ENCODE measurements at regions of chr4 and their contacts with region 1.

Region 1: DNA sequence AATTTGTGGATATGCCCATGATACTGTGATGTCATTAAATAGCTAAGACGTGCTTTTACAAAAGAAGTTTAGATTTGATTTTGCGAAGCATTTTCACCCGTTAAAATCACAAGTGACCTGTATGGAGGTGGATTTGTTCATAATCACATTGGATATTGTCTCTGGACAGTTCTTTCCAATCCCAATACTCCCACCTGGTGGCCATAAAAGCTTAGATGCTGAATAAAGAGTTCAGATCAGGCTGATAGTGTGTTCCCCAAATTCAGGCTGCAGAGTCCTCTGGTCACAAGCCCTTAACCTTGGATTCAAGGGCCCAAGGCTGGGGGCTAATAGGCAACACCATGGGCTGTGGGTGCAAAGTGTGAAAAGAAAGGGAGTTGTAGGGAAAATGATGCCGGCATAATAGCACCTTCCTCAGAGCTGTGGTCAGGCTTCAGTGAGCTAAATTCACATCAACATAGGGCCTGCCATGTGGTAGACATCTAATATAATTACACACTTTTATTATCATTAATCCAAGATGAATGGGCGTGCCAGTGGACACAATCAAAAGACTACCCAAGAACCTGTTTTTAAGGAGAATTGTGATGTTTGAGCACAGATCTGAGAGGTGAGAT is 28.1 kb downstream of the SMIM43 start:
- DNase-seq: no peak
- H3K4me3 ChIP-seq: no peak overlapping the region
- H3K27ac ChIP-seq: no peak overlapping the region
- H3K4me1 ChIP-seq: no peaks in the 10 kb centered on the region
- H3K27me3 ChIP-seq: no peaks in the 10 kb centered on the region
- CTCF ChIP-seq: peak in 4 of 6 experiments; percentile 31 to 49 (median 44)
- POLR2A ChIP-seq: no peak

Region 2: DNA sequence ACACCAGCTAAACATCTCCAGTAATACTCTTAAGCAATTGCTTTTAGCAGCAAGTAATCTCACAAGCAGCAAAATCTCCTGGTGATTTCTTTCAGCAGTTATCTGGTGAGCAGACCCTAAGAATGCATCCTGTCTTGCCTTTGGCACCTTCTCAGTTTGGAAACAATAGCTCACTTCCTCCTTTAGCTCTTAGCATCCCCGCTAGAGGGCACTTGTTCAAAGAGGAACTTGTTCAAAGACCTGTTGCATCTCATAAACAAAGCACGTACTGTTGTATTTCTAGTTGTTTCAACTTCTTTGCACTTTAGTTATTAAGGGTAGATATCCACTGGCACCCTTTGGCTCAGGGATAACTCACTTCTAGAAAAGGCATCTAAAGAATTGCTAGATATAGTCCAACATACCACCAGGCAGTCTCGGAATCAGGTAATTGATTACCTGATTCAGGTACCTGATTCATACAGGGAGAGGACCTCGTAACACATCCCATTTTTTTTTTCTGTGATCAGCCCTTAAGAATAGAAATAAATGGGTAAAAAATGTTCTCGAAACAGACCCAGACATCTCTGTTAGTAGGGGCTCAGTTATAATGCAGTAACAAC is 274.1 kb before region 1 on chr4:
- intact Hi-C with region 1: loop called (anchors 10 kb)
- DNase-seq: no peak
- H3K4me3 ChIP-seq: no peak overlapping the region
- H3K27ac ChIP-seq: no peak overlapping the region
- H3K4me1 ChIP-seq: no peaks in the 10 kb centered on the region
- H3K27me3 ChIP-seq: peaks cover 0 to 3% (median 0%) of the 10 kb centered on the region in 4 donors
- CTCF ChIP-seq: peak in 5 of 6 experiments; percentile 31 to 61 (median 38)
- POLR2A ChIP-seq: no peak

Measured in esophagus squamous epithelium (tissue), 5 donors.